Motor neuron (in vitro differentiated cells): ENCODE measurements at regions of chr12 and their contacts with region 1.

Region 1: DNA sequence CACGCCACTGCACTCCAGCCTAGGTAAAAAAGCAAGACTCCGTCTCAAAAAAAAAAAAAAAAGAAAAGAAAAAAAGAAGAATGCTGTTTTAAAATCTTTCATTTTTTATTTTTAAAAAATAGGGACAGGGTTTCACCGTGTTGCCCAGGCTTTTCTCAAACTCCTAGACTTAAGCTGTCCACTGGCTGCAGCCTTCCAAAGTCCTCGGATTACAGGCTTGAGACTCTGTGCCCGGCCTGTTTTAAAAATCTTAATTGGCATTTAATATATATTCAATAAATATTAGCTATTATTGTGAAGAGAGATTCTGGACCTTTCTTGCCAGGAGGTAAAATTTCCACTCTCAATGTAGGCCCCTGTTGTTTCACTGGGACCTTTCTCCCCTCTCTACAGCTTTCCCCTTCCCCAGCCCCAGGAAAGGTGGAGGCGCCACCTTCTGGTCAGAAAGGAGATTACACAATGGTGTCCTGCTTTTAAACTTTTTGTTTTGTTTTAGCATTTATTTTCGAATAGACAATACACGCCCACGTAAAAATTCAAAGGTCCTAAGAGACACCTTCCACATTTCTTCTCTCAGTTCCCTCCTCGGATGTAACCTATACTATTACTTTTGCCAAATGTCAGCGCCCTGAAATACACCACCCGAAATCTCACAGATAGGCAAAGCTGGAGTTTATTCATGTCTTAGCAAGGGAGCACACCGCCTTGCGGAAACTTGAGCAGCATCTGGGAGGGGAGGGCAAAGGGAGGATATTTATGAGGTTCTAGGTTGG is 23.8 kb upstream of the PHC1 start:
- ATAC-seq: peak; percentile 52 to 93 (median 76)
- H3K4me3 ChIP-seq: peak overlapping the region in 3 of 5 donors; percentile 9 to 30 (median 19)
- H3K27ac ChIP-seq: no peak overlapping the region
- H3K4me1 ChIP-seq: no peaks in the 10 kb centered on the region

Region 2: GRCh38 chr12:8662593-8662992 is 227.9 kb before region 1 on chr12 and contains the start of gene MFAP5:
- in situ Hi-C with region 1: loop called in 1 of 9 experiments (anchors 25 kb)
- ATAC-seq: peak in 2 of 8 experiments; percentile 71 to 83
- H3K4me3 ChIP-seq: no peak within 1 kb of the TSS
- H3K27ac ChIP-seq: no peak within 1 kb of the TSS
- H3K4me1 ChIP-seq: no peaks in the 10 kb centered on the region
- total RNA-seq, gene MFAP5: 0.66 to 1.9 (median 0.81) TPM in 5 of 8 experiments, not detected in the others

Region 3: DNA sequence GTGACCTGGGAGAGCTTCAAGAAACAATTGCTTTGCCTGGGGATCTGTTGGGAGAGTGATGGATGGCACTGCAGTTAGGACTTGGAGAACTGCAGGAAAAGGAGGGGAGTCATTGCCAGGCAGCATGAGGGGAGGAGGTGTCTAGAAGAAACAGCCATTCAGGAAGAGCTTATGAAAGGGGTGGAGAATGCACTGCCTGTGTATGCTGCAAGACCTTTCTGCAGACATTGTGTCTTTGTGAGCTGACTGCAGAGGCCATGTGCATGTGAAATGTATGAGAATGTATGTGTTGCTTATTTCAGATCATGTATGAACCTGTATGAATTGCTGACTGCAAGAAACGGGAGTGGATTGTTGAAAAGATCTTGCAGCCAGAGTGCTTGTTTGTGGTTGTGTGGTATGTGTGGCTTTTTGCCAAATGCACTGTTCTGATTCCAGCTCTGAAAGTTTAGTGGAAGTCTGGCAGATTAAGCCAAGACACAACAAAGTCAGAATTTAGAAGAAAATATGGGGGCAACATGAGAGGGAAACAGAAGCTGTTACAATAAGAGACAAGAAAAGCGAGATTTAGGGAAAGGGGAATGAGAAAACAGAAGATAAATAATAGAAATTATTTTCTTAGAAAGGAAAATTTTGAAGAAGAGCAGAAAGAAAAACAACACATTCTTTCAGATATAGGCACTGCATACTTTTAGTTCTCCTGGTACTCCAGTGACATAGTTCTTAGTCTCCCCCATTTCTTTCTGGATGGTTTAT is 202.5 kb before region 1 on chr12:
- in situ Hi-C with region 1: loop called in 7 of 9 experiments (anchors 10 to 25 kb)
- ATAC-seq: peak; percentile 81 to 98 (median 96)
- H3K4me3 ChIP-seq: peak overlapping the region in 4 of 5 donors; percentile 9 to 16 (median 12)
- H3K27ac ChIP-seq: peak overlapping the region; percentile 84 to 89
- H3K4me1 ChIP-seq: peaks cover 43% of the 10 kb centered on the region in 2 donors

Region 4: DNA sequence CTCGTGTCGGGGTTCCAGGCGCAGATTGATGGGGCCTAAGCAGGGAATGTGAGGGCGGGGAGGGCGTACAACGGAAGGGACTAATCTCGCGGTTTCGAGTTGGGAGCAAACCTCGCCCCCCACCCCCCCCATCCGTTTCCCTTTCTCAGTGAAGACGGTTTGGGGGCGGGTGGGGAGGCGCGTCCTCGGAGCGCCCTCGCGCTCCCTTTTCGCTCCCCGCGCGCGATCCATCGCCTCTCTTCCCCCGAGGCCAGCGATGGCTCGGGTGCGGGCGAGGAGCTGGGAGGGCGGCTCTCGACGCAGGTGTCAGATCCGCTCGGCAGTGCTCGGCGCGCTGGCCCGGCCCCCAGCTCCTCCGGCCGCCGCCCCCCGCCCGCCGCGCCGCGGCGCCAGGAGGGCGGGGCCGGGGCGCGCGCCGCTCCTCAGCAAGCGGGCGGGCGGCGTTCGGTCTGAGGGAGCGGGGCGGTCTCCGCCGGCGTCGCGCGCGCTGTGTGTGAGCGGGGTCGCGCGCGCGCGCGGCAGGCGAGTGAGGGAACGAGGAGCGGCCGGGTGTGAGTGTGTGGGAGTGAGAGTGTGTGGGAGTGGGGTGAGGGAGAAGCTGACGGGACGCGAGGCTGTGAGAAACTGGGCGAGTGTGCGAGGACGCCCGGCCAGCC is 192.9 kb before region 1 on chr12 and contains the start of gene RIMKLB:
- in situ Hi-C with region 1: loop called in 6 of 9 experiments (anchors 25 kb)
- ATAC-seq: peak; percentile 76 to 86 (median 84)
- H3K4me3 ChIP-seq: peak within 1 kb of the TSS; percentile 52 to 98 (median 87)
- H3K27ac ChIP-seq: peak within 1 kb of the TSS; percentile 86 to 88
- H3K4me1 ChIP-seq: peaks cover 17 to 29% of the 10 kb centered on the region in 2 donors
- total RNA-seq, gene RIMKLB: 19.3 to 109 (median 71.1) TPM

Region 5: GRCh38 chr12:8980137-8980536 is 89.6 kb after region 1 on chr12:
- in situ Hi-C with region 1: no loop called
- ATAC-seq: no peak
- H3K4me3 ChIP-seq: no peak overlapping the region
- H3K27ac ChIP-seq: no peak overlapping the region
- H3K4me1 ChIP-seq: no peaks in the 10 kb centered on the region